Sigmoid colon (tissue), 7 donors: ENCODE measurements at regions of chr11 and their contacts with region 1.

Region 1: DNA sequence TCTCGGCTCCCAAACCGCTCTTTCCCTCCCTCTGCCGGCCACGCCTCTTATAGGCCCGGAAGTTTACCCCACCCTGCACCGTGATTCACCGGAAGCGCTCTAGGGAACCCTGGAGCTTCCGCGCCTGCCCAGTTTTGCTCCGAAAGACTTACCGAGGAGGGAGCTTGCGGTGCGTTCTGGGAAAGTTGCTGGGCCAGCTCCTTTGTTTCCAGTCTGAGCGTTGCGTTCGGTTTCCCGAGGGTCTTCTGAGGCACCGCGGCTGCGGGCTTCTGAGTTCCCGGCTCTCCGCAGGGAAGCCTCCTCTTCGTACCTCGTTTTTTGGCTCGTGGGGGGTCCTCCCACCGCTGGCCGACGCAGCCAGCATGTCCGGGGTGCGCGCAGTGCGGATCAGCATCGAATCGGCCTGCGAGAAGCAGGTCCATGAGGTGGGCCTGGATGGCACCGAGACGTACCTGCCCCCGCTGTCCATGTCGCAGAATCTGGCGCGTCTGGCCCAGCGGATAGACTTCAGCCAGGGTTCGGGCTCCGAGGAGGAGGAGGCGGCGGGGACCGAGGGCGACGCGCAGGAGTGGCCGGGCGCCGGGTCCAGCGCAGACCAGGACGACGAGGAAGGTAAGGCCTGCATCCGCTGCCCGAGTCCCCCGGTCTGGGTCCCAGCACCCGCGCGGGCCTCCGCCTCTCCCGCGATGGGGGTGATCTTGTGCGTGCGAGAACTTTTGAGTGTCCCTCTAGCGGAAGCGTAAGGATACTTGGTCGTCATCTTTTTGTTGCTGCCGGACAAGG is at the start of gene MED17:
- DNase-seq: peak; percentile 96
- H3K4me3 ChIP-seq: peak within 1 kb of the TSS; percentile 72 to 97 (median 88)
- H3K27ac ChIP-seq: peak within 1 kb of the TSS; percentile 93 to 98 (median 96)
- H3K4me1 ChIP-seq: peaks cover 0 to 39% (median 37%) of the 10 kb centered on the region in 4 donors
- H3K27me3 ChIP-seq: no peaks in the 10 kb centered on the region
- CTCF ChIP-seq: peak; percentile 30 to 48 (median 39)
- EP300 ChIP-seq: no peak
- POLR2A ChIP-seq: peak; percentile 72 to 79
- total RNA-seq, gene MED17: 19.9 to 28.9 (median 23.9) TPM

Region 2: DNA sequence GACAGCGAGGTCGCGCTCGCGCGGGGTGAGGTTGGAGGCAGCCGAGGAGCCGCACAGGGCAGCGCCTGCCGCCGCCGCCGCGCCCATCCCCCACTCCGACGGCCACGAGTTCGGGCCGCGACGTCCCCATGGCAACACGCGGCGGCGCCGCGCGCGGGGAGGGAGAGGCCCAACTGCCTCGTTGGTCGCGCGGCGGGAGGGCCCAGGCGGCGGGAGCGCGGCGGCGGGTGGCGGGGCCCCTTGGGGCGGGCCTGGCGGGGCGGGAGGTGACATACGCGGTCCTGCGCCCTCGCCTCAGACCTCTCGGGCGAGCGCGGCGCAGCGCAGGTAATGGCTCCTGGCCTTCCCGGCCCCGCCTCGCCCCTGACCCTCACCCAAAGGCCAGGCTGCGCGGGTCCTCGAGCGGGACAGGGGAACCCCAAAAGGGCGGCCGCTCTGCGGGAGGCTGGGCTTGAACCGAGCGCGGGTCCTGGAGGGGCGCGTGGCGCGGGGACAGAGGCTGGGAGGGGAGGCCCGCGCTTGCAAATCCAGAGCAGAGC is 453.8 kb before region 1 on chr11 and contains the start of gene DEUP1:
- intact Hi-C with region 1: no loop called
- DNase-seq: peak; percentile 56
- H3K4me3 ChIP-seq: peak within 1 kb of the TSS in 3 of 4 donors; percentile 18 to 39 (median 39)
- H3K27ac ChIP-seq: no peak within 1 kb of the TSS
- H3K4me1 ChIP-seq: peaks cover 0 to 10% (median 7%) of the 10 kb centered on the region in 4 donors
- H3K27me3 ChIP-seq: peaks cover 3 to 25% (median 7%) of the 10 kb centered on the region in 3 donors
- CTCF ChIP-seq: no peak
- EP300 ChIP-seq: no peak
- POLR2A ChIP-seq: no peak
- total RNA-seq, gene DEUP1: not detected

Region 3: GRCh38 chr11:93662177-93662575 is 122.2 kb before region 1 on chr11:
- intact Hi-C with region 1: loop called (anchors 10 kb)
- DNase-seq: no peak
- H3K4me3 ChIP-seq: peak overlapping the region; percentile 67 to 97 (median 78)
- H3K27ac ChIP-seq: peak overlapping the region; percentile 82 to 95 (median 84)
- H3K4me1 ChIP-seq: peaks cover 0 to 16% (median 6%) of the 10 kb centered on the region in 4 donors
- H3K27me3 ChIP-seq: no peaks in the 10 kb centered on the region
- CTCF ChIP-seq: no peak
- EP300 ChIP-seq: no peak
- POLR2A ChIP-seq: no peak

Region 4: DNA sequence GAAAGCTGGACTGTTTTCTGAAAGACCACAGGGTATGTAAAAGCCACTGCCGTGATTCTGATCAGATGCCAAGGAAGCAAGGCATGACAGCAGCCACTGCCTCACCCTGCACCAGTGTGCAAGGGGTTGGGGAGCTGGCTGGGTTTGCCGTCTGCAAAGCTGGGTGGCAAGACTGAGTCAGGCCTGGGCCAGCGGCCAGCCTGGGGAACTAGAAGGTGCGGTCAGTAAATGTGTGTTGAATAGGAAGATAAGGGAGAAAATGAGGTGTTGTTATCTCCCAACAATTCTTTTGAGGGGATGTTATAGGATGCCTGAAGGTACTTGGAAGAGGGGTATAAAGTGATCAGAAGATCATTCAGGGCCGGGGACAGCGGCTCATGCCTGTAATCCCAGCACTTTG is 58.1 kb after region 1 on chr11:
- intact Hi-C with region 1: no loop called
- DNase-seq: no peak
- H3K4me3 ChIP-seq: no peak overlapping the region
- H3K27ac ChIP-seq: no peak overlapping the region
- H3K4me1 ChIP-seq: peaks cover 0 to 11% (median 0%) of the 10 kb centered on the region in 4 donors
- H3K27me3 ChIP-seq: no peaks in the 10 kb centered on the region
- CTCF ChIP-seq: no peak
- EP300 ChIP-seq: no peak
- POLR2A ChIP-seq: no peak

Region 5: DNA sequence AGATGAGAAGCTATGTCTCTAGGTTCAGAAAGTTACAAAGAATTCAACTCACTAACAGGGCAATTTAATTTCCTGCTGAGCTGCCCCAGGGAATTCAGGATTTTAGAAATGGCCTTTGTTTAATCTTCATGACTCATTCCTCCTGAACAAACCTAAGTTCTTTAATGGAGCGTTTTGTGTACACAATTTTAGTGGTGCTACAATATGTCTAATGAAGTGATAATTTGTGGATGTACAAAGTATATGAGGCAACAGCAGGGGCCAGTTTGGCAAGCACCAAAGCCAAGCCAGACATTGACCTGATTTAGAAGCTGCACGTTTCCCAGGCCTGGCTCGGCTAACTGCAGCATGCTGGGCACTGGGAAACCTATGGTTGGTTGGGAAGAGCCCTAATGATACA is 202.4 kb after region 1 on chr11:
- intact Hi-C with region 1: no loop called
- DNase-seq: no peak
- H3K4me3 ChIP-seq: no peak overlapping the region
- H3K27ac ChIP-seq: no peak overlapping the region
- H3K4me1 ChIP-seq: no peaks in the 10 kb centered on the region
- H3K27me3 ChIP-seq: no peaks in the 10 kb centered on the region
- CTCF ChIP-seq: no peak
- EP300 ChIP-seq: no peak
- POLR2A ChIP-seq: no peak

Region 6: GRCh38 chr11:94525546-94526324 is 741.4 kb after region 1 on chr11:
- intact Hi-C with region 1: no loop called
- DNase-seq: peak; percentile 82
- H3K4me3 ChIP-seq: no peak overlapping the region
- H3K27ac ChIP-seq: no peak overlapping the region
- H3K4me1 ChIP-seq: peaks cover 0 to 4% (median 0%) of the 10 kb centered on the region in 4 donors
- H3K27me3 ChIP-seq: no peaks in the 10 kb centered on the region
- CTCF ChIP-seq: no peak
- EP300 ChIP-seq: no peak
- POLR2A ChIP-seq: no peak